Endothelial cell of umbilical vein (primary cell): ENCODE measurements at regions of chr19 and their contacts with region 1.

Region 1: GRCh38 chr19:53076977-53077376 is 26.2 kb downstream of the ZNF160 start:
- DNase-seq: peak; percentile 72
- H3K4me3 ChIP-seq: no peak overlapping the region
- H3K27ac ChIP-seq: no peak overlapping the region
- H3K4me1 ChIP-seq: no peaks in the 10 kb centered on the region
- H3K27me3 ChIP-seq: no peaks in the 10 kb centered on the region
- CTCF ChIP-seq: peak; percentile 78 to 79
- POLR2A ChIP-seq: no peak

Region 2: DNA sequence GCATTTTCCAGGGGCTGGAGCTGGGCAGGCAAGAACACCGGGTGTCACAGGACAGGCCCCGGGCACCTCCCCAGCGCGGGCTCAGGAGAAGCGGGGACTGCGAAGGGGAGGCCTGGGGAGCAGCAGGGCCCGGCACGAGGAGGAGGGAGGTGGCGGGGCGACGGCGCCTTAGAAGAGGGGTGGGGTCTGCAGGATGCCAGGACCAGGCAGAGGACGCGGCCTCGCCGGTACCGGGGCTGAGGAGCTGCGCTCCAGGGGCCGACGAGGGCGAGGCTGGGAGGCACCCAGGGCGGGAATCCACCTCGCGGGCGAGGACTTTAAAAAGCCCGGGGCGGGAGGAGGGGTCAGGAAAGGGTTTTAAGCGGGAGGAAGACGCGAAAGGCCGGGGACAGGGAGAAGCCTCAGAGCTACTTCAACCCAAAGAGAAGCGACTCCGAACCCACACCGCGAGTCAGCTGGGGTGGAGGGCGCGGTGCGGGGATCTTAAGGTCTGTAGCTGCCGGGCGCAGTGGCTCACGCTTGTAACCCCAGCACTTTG is 81.2 kb after region 1 on chr19:
- CTCF ChIA-PET with region 1: interaction called, 15 read pairs
- POLR2A ChIA-PET with region 1: no interaction called
- dilution Hi-C with region 1: no loop called
- intact Hi-C with region 1: no loop called
- DNase-seq: peak; percentile 18
- H3K4me3 ChIP-seq: peak overlapping the region; percentile 50 to 68 (median 66)
- H3K27ac ChIP-seq: no peak overlapping the region
- H3K4me1 ChIP-seq: peaks cover 8% of the 10 kb centered on the region
- H3K27me3 ChIP-seq: no peaks in the 10 kb centered on the region
- CTCF ChIP-seq: no peak
- POLR2A ChIP-seq: no peak

Region 3: DNA sequence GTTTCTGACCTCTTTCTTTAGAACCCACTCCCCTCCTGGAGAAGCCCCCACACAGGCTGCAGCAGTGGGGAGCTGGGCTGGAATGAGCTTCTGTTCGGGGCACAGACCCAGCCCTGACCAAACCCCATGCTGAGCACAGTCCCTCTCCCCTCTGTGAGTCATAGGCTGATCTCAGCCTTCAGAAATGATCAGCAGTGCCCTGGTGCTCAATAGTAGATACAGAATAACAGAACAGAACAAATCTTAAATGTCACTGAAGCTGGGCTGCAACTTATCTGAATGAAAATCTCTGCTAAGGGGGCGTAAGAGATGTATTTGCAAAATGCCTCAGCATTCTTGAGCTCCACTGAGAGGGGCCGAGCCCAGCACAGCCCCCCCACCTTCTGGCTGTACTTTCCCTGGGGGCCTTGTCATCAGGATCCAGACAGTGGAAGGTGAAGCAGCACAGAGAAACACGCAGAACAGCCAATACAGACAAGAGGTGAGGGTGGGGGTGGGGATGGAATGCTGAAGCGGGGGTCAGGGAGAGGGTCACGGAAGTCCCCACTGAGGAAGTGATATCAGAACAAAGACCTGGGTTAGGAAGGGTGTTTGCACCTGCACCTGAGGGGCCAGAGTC is 106.3 kb after region 1 on chr19:
- CTCF ChIA-PET with region 1: interaction called, 26 read pairs
- POLR2A ChIA-PET with region 1: no interaction called
- dilution Hi-C with region 1: no loop called
- intact Hi-C with region 1: no loop called
- DNase-seq: no peak
- H3K4me3 ChIP-seq: no peak overlapping the region
- H3K27ac ChIP-seq: no peak overlapping the region
- H3K4me1 ChIP-seq: no peaks in the 10 kb centered on the region
- H3K27me3 ChIP-seq: no peaks in the 10 kb centered on the region
- CTCF ChIP-seq: no peak
- POLR2A ChIP-seq: no peak

Region 4: DNA sequence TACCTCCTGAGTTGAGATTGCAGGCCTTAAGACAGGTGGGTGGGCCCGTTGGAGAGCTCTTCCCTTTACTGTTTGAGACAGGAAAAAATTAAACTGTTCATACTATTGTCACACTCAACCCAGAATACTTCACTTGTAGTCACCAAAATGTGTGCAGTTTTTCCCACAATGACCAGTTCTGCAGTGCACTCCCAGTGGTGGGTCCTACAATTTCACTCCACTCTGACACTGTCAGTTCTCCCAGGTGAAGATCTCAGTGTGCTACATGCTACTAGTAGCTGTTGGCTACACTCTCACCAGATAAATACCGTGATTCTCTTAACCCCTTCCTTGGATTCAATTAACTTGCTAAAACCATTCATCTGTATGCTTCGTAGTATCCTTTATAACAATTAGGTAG is 113.3 kb after region 1 on chr19:
- CTCF ChIA-PET with region 1: interaction called, 26 read pairs
- POLR2A ChIA-PET with region 1: no interaction called
- dilution Hi-C with region 1: no loop called
- intact Hi-C with region 1: loop called (anchors 5 kb)
- DNase-seq: no peak
- H3K4me3 ChIP-seq: no peak overlapping the region
- H3K27ac ChIP-seq: no peak overlapping the region
- H3K4me1 ChIP-seq: peaks cover 2% of the 10 kb centered on the region
- H3K27me3 ChIP-seq: no peaks in the 10 kb centered on the region
- CTCF ChIP-seq: no peak
- POLR2A ChIP-seq: no peak

Region 5: DNA sequence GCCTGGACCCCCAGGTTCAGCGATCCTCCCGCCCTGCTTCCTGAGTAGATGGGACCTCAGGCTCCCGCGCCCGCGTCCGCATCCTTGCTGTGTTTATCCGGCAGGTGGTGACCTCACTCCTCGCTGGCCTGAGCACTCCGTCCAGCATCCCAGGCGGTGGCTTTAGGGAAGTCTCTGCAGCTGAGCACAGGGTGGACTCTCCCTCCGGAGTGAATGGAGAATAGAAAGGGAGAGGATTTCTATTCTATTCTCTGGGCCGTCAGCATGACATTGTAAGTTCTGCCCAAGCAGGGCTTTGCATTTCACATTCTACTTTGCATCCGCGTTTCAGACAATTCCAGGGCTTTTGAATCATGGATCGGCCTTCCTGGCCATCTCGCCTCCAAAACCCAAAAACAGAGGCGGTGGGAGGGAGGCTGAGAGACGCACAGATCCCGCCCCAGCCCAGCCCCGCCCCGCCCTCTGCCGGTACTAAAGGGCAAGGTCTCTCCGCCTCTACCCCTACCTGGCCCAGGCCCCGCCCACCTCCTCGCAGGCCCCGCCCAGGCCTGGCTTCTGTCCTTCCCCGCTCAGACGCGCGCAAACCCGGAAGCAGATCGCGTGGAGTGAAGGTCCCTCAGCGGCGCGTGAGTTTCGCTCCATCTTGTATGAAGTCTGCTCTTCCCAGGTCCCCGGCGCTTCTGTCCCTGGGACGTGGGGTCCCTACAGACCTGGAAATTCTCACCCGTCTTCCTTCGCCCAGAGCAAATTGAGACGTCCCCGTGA is 288.3 kb after region 1 on chr19 and contains the start of gene ZNF525:
- CTCF ChIA-PET with region 1: no interaction called
- POLR2A ChIA-PET with region 1: no interaction called
- dilution Hi-C with region 1: no loop called
- intact Hi-C with region 1: loop called (anchors 5 kb)
- DNase-seq: peak; percentile 67
- H3K4me3 ChIP-seq: peak within 1 kb of the TSS; percentile 53 to 88 (median 56)
- H3K27ac ChIP-seq: no peak within 1 kb of the TSS
- H3K4me1 ChIP-seq: peaks cover 2% of the 10 kb centered on the region
- H3K27me3 ChIP-seq: no peaks in the 10 kb centered on the region
- CTCF ChIP-seq: peak in 1 of 2 donors; percentile 16
- POLR2A ChIP-seq: peak; percentile 43
- total RNA-seq, gene ZNF525: 3.7 and 3.8 TPM in 2 replicates